CD8-positive, alpha-beta T cell (primary cell): ENCODE measurements at regions of chr3 and their contacts with region 1.

Region 1: GRCh38 chr3:27721717-27722542 is at the start of gene EOMES:
- DNase-seq: peak; percentile 58 to 91 (median 78)
- ATAC-seq: peak; percentile 77
- H3K4me3 ChIP-seq: peak within 1 kb of the TSS; percentile 73 to 94
- H3K4me3 Mint-ChIP-seq: peak within 1 kb of the TSS; percentile 93
- H3K27ac ChIP-seq: peak within 1 kb of the TSS; percentile 50 to 74
- H3K27ac Mint-ChIP-seq: peak within 1 kb of the TSS; percentile 77
- H3K4me1 ChIP-seq: peaks cover 26% of the 10 kb centered on the region
- H3K4me1 Mint-ChIP-seq: peaks cover 51% of the 10 kb centered on the region
- H3K27me3 ChIP-seq: peaks cover 14 to 37% of the 10 kb centered on the region in 2 experiments
- H3K27me3 Mint-ChIP-seq: peaks cover 36% of the 10 kb centered on the region
- CTCF ChIP-seq: peak; percentile 38
- total RNA-seq, gene EOMES: 8.6 to 8.9 TPM

Region 2: GRCh38 chr3:27559835-27560234 is 162.1 kb before region 1 on chr3:
- CTCF ChIA-PET with region 1: no interaction called
- POLR2A ChIA-PET with region 1: no interaction called
- intact Hi-C with region 1: no loop called
- DNase-seq: no peak
- ATAC-seq: no peak
- H3K4me3 ChIP-seq: no peak overlapping the region
- H3K4me3 Mint-ChIP-seq: no peak overlapping the region
- H3K27ac ChIP-seq: no peak overlapping the region
- H3K27ac Mint-ChIP-seq: no peak overlapping the region
- H3K4me1 ChIP-seq: no peaks in the 10 kb centered on the region
- H3K4me1 Mint-ChIP-seq: no peaks in the 10 kb centered on the region
- H3K27me3 ChIP-seq: no peaks in the 10 kb centered on the region
- H3K27me3 Mint-ChIP-seq: no peaks in the 10 kb centered on the region
- CTCF ChIP-seq: no peak

Region 3: GRCh38 chr3:27880969-27881892 is 159.3 kb after region 1 on chr3:
- CTCF ChIA-PET with region 1: interaction called, 10 read pairs
- POLR2A ChIA-PET with region 1: interaction called, 12 read pairs
- intact Hi-C with region 1: loop called (anchors 5 to 10 kb)
- DNase-seq: peak; percentile 34 to 87 (median 65)
- ATAC-seq: peak; percentile 88
- H3K4me3 ChIP-seq: peak overlapping the region; percentile 37 to 47
- H3K4me3 Mint-ChIP-seq: peak overlapping the region; percentile 86
- H3K27ac ChIP-seq: peak overlapping the region; percentile 22 to 79
- H3K27ac Mint-ChIP-seq: peak overlapping the region; percentile 93
- H3K4me1 ChIP-seq: peaks cover 65% of the 10 kb centered on the region
- H3K4me1 Mint-ChIP-seq: peaks cover 78% of the 10 kb centered on the region
- H3K27me3 ChIP-seq: no peaks in the 10 kb centered on the region
- H3K27me3 Mint-ChIP-seq: no peaks in the 10 kb centered on the region
- CTCF ChIP-seq: no peak

Region 4: DNA sequence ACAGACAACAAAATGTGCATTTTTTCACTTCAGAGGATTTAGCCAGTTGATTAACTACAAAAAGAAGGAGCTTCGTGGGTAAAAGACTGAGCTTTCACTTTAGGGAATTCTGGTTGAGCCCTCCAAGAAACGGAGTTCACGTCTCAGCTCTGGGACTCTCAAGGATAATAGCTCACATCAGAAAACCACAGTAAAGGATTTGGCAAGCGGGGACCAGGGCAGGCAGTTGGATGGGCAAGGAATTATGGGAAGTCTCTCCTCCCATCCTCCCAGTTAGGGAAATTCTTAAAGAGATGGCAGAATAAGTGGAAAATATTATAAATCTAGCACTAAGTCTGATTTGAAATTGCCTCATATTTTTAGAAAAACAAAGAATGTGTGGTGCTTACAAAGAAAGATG is 188.5 kb after region 1 on chr3:
- CTCF ChIA-PET with region 1: interaction called, 12 read pairs
- POLR2A ChIA-PET with region 1: interaction called, 3 read pairs
- intact Hi-C with region 1: no loop called
- DNase-seq: no peak
- ATAC-seq: no peak
- H3K4me3 ChIP-seq: no peak overlapping the region
- H3K4me3 Mint-ChIP-seq: no peak overlapping the region
- H3K27ac ChIP-seq: no peak overlapping the region
- H3K27ac Mint-ChIP-seq: no peak overlapping the region
- H3K4me1 ChIP-seq: peaks cover 4% of the 10 kb centered on the region
- H3K4me1 Mint-ChIP-seq: peaks cover 19% of the 10 kb centered on the region
- H3K27me3 ChIP-seq: no peaks in the 10 kb centered on the region
- H3K27me3 Mint-ChIP-seq: no peaks in the 10 kb centered on the region
- CTCF ChIP-seq: no peak

Region 5: GRCh38 chr3:28077572-28077971 is 355.6 kb after region 1 on chr3:
- CTCF ChIA-PET with region 1: interaction called, 13 read pairs
- POLR2A ChIA-PET with region 1: no interaction called
- intact Hi-C with region 1: no loop called
- DNase-seq: peak in 1 of 9 experiments; percentile 3
- ATAC-seq: no peak
- H3K4me3 ChIP-seq: no peak overlapping the region
- H3K4me3 Mint-ChIP-seq: no peak overlapping the region
- H3K27ac ChIP-seq: no peak overlapping the region
- H3K27ac Mint-ChIP-seq: no peak overlapping the region
- H3K4me1 ChIP-seq: no peaks in the 10 kb centered on the region
- H3K4me1 Mint-ChIP-seq: no peaks in the 10 kb centered on the region
- H3K27me3 ChIP-seq: no peaks in the 10 kb centered on the region
- H3K27me3 Mint-ChIP-seq: no peaks in the 10 kb centered on the region
- CTCF ChIP-seq: no peak

Region 6: GRCh38 chr3:28241221-28242160 is 519.6 kb after region 1 on chr3 and contains the start of gene CMC1:
- CTCF ChIA-PET with region 1: interaction called, 7 read pairs
- POLR2A ChIA-PET with region 1: interaction called, 9 read pairs
- intact Hi-C with region 1: loop called in 1 of 2 experiments (anchors 1 kb)
- DNase-seq: peak; percentile 68 to 94 (median 90)
- ATAC-seq: peak; percentile 90
- H3K4me3 ChIP-seq: peak within 1 kb of the TSS; percentile 76 to 89
- H3K4me3 Mint-ChIP-seq: peak within 1 kb of the TSS; percentile 95
- H3K27ac ChIP-seq: peak within 1 kb of the TSS; percentile 53 to 77
- H3K27ac Mint-ChIP-seq: peak within 1 kb of the TSS; percentile 92
- H3K4me1 ChIP-seq: peaks cover 29% of the 10 kb centered on the region
- H3K4me1 Mint-ChIP-seq: peaks cover 50% of the 10 kb centered on the region
- H3K27me3 ChIP-seq: no peaks in the 10 kb centered on the region
- H3K27me3 Mint-ChIP-seq: no peaks in the 10 kb centered on the region
- CTCF ChIP-seq: no peak
- total RNA-seq, gene CMC1: 28.0 to 31.0 TPM

Region 7: GRCh38 chr3:28348629-28349483 is 626.9 kb after region 1 on chr3 and contains the starts of genes AZI2 and ZCWPW2:
- CTCF ChIA-PET with region 1: interaction called, 3 read pairs
- POLR2A ChIA-PET with region 1: interaction called, 12 read pairs
- intact Hi-C with region 1: no loop called
- DNase-seq: peak; percentile 84 to 96 (median 91)
- ATAC-seq: peak; percentile 89
- H3K4me3 ChIP-seq: peak within 1 kb of the TSS; percentile 96 to 97
- H3K4me3 Mint-ChIP-seq: peak within 1 kb of the TSS; percentile 98
- H3K27ac ChIP-seq: peak within 1 kb of the TSS; percentile 95 to 99
- H3K27ac Mint-ChIP-seq: peak within 1 kb of the TSS; percentile 95
- H3K4me1 ChIP-seq: peaks cover 35% of the 10 kb centered on the region
- H3K4me1 Mint-ChIP-seq: peaks cover 60% of the 10 kb centered on the region
- H3K27me3 ChIP-seq: no peaks in the 10 kb centered on the region
- H3K27me3 Mint-ChIP-seq: no peaks in the 10 kb centered on the region
- CTCF ChIP-seq: no peak
- total RNA-seq, gene AZI2: 27.2 to 29.2 TPM
- total RNA-seq, gene ZCWPW2: 0.54 TPM in 1 of 2 experiments, not detected in the other

Region 8: DNA sequence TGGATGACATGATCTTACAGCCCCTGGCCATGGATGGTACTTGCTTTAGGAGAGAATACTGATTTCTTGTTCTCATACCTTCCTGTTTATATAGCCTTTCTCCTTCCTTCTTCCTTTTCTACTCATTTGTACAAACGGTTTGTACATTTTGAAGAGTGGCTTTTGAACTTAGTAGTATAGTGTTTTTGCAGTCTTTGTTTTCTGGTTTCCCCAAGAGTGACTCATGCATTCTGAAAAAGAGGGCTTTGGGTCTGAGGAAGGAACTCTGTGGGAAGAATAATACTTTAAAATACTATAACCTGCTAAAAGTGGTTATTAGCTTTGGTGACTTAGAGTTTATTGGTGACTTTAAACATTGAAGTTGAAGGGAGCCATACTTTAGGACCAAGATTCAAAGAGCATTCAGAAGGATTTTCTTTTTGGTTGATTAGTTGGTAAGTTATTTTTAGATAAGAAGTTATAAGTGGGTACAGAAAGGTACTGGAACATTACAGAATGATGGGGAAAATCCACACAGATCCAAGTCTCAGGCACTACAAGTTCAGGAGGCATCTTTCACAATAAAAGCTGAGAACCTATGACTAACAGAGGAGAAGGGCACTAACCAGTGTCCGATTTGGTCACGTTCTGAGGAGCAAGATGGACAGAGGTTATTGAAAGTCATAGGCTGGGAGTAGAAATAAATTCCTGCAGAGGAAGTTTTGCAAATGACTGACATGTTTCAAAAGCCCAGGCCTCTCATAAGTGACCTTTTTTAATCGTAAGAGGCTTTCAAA is 996.3 kb after region 1 on chr3:
- CTCF ChIA-PET with region 1: no interaction called
- POLR2A ChIA-PET with region 1: no interaction called
- intact Hi-C with region 1: no loop called
- DNase-seq: no peak
- ATAC-seq: no peak
- H3K4me3 ChIP-seq: no peak overlapping the region
- H3K4me3 Mint-ChIP-seq: no peak overlapping the region
- H3K27ac ChIP-seq: no peak overlapping the region
- H3K27ac Mint-ChIP-seq: no peak overlapping the region
- H3K4me1 ChIP-seq: no peaks in the 10 kb centered on the region
- H3K4me1 Mint-ChIP-seq: no peaks in the 10 kb centered on the region
- H3K27me3 ChIP-seq: no peaks in the 10 kb centered on the region
- H3K27me3 Mint-ChIP-seq: no peaks in the 10 kb centered on the region
- CTCF ChIP-seq: no peak